Activated naive CD4-positive, alpha-beta T cell treated with anti-CD3 and anti-CD28 coated beads for 36 hours (primary cell): ENCODE measurements at regions of chr1 and their contacts with region 1.

Region 1: GRCh38 chr1:40338745-40339424 is 21.8 kb upstream of the COL9A2 start:
- DNase-seq: peak; percentile 97
- H3K4me3 Mint-ChIP-seq: peak overlapping the region; percentile 35
- H3K27ac Mint-ChIP-seq: peak overlapping the region; percentile 72
- H3K4me1 Mint-ChIP-seq: peaks cover 52% of the 10 kb centered on the region
- H3K27me3 Mint-ChIP-seq: no peaks in the 10 kb centered on the region

Region 2: GRCh38 chr1:40078512-40079333 is 260.2 kb before region 1 on chr1:
- CTCF ChIA-PET with region 1: interaction called, 33 read pairs
- intact Hi-C with region 1: no loop called
- DNase-seq: peak; percentile 75
- H3K4me3 Mint-ChIP-seq: no peak overlapping the region
- H3K27ac Mint-ChIP-seq: no peak overlapping the region
- H3K4me1 Mint-ChIP-seq: peaks cover 7% of the 10 kb centered on the region
- H3K27me3 Mint-ChIP-seq: no peaks in the 10 kb centered on the region

Region 3: DNA sequence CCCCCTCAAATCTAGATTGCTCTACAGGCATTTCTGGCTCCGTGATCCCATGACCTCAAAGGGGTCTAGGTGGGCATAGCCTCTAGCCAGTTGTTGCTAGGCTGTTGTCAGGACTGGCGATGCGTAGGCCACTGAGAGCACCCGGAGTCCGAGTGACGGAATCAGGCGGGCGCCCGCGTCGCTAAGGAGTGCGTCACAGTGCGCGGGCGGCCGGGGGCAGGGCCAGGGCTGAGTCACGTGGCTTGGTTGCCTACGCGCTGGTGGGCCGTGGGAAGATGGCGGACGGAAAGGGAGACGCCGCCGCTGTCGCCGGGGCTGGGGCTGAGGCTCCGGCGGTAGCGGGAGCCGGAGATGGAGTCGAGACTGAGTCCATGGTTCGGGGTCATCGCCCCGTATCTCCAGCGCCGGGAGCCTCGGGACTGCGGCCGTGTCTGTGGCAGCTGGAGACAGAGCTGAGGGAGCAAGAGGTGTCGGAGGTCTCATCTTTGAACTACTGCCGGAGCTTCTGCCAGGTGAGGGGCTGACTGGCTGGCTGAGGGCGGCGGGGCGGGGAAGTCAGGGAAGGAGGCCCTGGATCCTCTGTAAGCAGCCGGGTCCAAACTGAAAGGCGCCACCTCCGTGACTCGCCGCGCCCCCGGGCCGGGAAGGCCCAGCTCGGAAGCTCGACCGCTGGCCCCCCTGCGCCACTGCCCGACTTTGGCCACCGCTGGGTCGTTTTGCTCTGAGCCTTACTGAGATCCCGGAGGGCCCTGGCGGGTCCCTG is 177.6 kb before region 1 on chr1 and contains the start of gene RLF:
- CTCF ChIA-PET with region 1: interaction called, 226 read pairs
- intact Hi-C with region 1: loop called (anchors 2 kb)
- DNase-seq: peak; percentile 97
- H3K4me3 Mint-ChIP-seq: peak within 1 kb of the TSS; percentile 10
- H3K27ac Mint-ChIP-seq: no peak within 1 kb of the TSS
- H3K4me1 Mint-ChIP-seq: peaks cover 5% of the 10 kb centered on the region
- H3K27me3 Mint-ChIP-seq: no peaks in the 10 kb centered on the region
- total RNA-seq, gene RLF: 12.5 to 12.9 TPM

Region 4: GRCh38 chr1:40315239-40315794 is 23.6 kb before region 1 on chr1:
- CTCF ChIA-PET with region 1: interaction called, 134 read pairs
- intact Hi-C with region 1: loop called (anchors 1 kb)
- DNase-seq: peak; percentile 90
- H3K4me3 Mint-ChIP-seq: peak overlapping the region; percentile 76
- H3K27ac Mint-ChIP-seq: no peak overlapping the region
- H3K4me1 Mint-ChIP-seq: peaks cover 28% of the 10 kb centered on the region
- H3K27me3 Mint-ChIP-seq: peaks cover 7% of the 10 kb centered on the region

Region 5: GRCh38 chr1:40394491-40395172 is 55.7 kb after region 1 on chr1:
- CTCF ChIA-PET with region 1: interaction called, 13 read pairs
- intact Hi-C with region 1: loop called (anchors 2 kb)
- DNase-seq: peak; percentile 79
- H3K4me3 Mint-ChIP-seq: peak overlapping the region; percentile 48
- H3K27ac Mint-ChIP-seq: peak overlapping the region; percentile 95
- H3K4me1 Mint-ChIP-seq: peaks cover 90% of the 10 kb centered on the region
- H3K27me3 Mint-ChIP-seq: no peaks in the 10 kb centered on the region

Region 6: GRCh38 chr1:40438391-40439015 is 99.6 kb after region 1 on chr1:
- CTCF ChIA-PET with region 1: interaction called, 10 read pairs
- intact Hi-C with region 1: no loop called
- DNase-seq: peak; percentile 33
- H3K4me3 Mint-ChIP-seq: no peak overlapping the region
- H3K27ac Mint-ChIP-seq: no peak overlapping the region
- H3K4me1 Mint-ChIP-seq: peaks cover 6% of the 10 kb centered on the region
- H3K27me3 Mint-ChIP-seq: no peaks in the 10 kb centered on the region